Endothelial cell of umbilical vein (primary cell): ENCODE measurements at regions of chr10 and their contacts with region 1.

Region 1: GRCh38 chr10:84429926-84430520 is 101.6 kb downstream of the CCSER2 start:
- DNase-seq: peak; percentile 73
- H3K4me3 ChIP-seq: no peak overlapping the region
- H3K27ac ChIP-seq: no peak overlapping the region
- H3K4me1 ChIP-seq: peaks cover 6% of the 10 kb centered on the region
- H3K27me3 ChIP-seq: no peaks in the 10 kb centered on the region
- CTCF ChIP-seq: peak; percentile 70 to 81
- POLR2A ChIP-seq: no peak

Region 2: DNA sequence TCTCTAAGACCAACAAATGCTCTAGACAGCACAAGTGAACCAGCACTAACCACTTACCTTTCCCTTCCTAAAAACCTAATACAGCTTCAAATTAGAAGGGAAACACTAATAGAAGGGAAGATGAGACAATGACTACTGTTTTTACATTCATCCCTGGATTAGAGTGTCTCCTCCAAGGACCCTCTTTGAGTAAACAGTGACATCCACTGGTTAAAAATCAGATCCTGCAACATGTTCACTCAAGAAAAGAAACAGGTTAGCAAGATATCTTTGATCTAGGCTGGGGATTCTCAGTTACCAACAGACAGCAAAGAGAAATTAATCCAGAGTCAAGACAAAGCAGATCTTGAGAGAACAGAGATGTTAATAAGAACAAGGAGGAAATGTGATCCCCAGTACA is 468.4 kb before region 1 on chr10:
- CTCF ChIA-PET with region 1: no interaction called
- POLR2A ChIA-PET with region 1: no interaction called
- dilution Hi-C with region 1: no loop called
- intact Hi-C with region 1: no loop called
- DNase-seq: no peak
- H3K4me3 ChIP-seq: no peak overlapping the region
- H3K27ac ChIP-seq: no peak overlapping the region
- H3K4me1 ChIP-seq: no peaks in the 10 kb centered on the region
- H3K27me3 ChIP-seq: no peaks in the 10 kb centered on the region
- CTCF ChIP-seq: no peak
- POLR2A ChIP-seq: no peak

Region 3: GRCh38 chr10:83983578-83984255 is 446.3 kb before region 1 on chr10:
- CTCF ChIA-PET with region 1: no interaction called
- POLR2A ChIA-PET with region 1: no interaction called
- dilution Hi-C with region 1: no loop called
- intact Hi-C with region 1: no loop called
- DNase-seq: peak; percentile 64
- H3K4me3 ChIP-seq: no peak overlapping the region
- H3K27ac ChIP-seq: no peak overlapping the region
- H3K4me1 ChIP-seq: peaks cover 11% of the 10 kb centered on the region
- H3K27me3 ChIP-seq: no peaks in the 10 kb centered on the region
- CTCF ChIP-seq: no peak
- POLR2A ChIP-seq: no peak

Region 4: GRCh38 chr10:84404783-84405182 is 25.2 kb before region 1 on chr10:
- CTCF ChIA-PET with region 1: interaction called, 10 read pairs
- POLR2A ChIA-PET with region 1: no interaction called
- dilution Hi-C with region 1: no loop called
- intact Hi-C with region 1: no loop called
- DNase-seq: no peak
- H3K4me3 ChIP-seq: no peak overlapping the region
- H3K27ac ChIP-seq: no peak overlapping the region
- H3K4me1 ChIP-seq: peaks cover 9% of the 10 kb centered on the region
- H3K27me3 ChIP-seq: no peaks in the 10 kb centered on the region
- CTCF ChIP-seq: no peak
- POLR2A ChIP-seq: no peak

Region 5: GRCh38 chr10:84452003-84452402 is 22.0 kb after region 1 on chr10:
- CTCF ChIA-PET with region 1: interaction called, 24 read pairs
- POLR2A ChIA-PET with region 1: no interaction called
- dilution Hi-C with region 1: no loop called
- intact Hi-C with region 1: no loop called
- DNase-seq: no peak
- H3K4me3 ChIP-seq: no peak overlapping the region
- H3K27ac ChIP-seq: no peak overlapping the region
- H3K4me1 ChIP-seq: no peaks in the 10 kb centered on the region
- H3K27me3 ChIP-seq: no peaks in the 10 kb centered on the region
- CTCF ChIP-seq: no peak
- POLR2A ChIP-seq: no peak

Region 6: GRCh38 chr10:84523526-84523925 is 93.5 kb after region 1 on chr10:
- CTCF ChIA-PET with region 1: interaction called, 11 read pairs
- POLR2A ChIA-PET with region 1: no interaction called
- dilution Hi-C with region 1: no loop called
- intact Hi-C with region 1: no loop called
- DNase-seq: peak; percentile 53
- H3K4me3 ChIP-seq: no peak overlapping the region
- H3K27ac ChIP-seq: no peak overlapping the region
- H3K4me1 ChIP-seq: peaks cover 12% of the 10 kb centered on the region
- H3K27me3 ChIP-seq: no peaks in the 10 kb centered on the region
- CTCF ChIP-seq: no peak
- POLR2A ChIP-seq: no peak